Activated CD4-positive, alpha-beta memory T cell treated with anti-CD3 and anti-CD28 coated beads, Interleukin-2, amount 10 ng/mL, durations not matched to agents 7 days and 5 days (primary cell): ENCODE measurements at regions of chr12 and their contacts with region 1.

Region 1: GRCh38 chr12:56189176-56189917 is at the start of gene SMARCC2:
- DNase-seq: peak; percentile 85
- H3K4me3 Mint-ChIP-seq: peak within 1 kb of the TSS; percentile 97
- H3K27ac Mint-ChIP-seq: peak within 1 kb of the TSS; percentile 94
- H3K4me1 Mint-ChIP-seq: peaks cover 53% of the 10 kb centered on the region
- H3K27me3 Mint-ChIP-seq: no peaks in the 10 kb centered on the region
- total RNA-seq, gene SMARCC2: 133 to 137 TPM

Region 2: DNA sequence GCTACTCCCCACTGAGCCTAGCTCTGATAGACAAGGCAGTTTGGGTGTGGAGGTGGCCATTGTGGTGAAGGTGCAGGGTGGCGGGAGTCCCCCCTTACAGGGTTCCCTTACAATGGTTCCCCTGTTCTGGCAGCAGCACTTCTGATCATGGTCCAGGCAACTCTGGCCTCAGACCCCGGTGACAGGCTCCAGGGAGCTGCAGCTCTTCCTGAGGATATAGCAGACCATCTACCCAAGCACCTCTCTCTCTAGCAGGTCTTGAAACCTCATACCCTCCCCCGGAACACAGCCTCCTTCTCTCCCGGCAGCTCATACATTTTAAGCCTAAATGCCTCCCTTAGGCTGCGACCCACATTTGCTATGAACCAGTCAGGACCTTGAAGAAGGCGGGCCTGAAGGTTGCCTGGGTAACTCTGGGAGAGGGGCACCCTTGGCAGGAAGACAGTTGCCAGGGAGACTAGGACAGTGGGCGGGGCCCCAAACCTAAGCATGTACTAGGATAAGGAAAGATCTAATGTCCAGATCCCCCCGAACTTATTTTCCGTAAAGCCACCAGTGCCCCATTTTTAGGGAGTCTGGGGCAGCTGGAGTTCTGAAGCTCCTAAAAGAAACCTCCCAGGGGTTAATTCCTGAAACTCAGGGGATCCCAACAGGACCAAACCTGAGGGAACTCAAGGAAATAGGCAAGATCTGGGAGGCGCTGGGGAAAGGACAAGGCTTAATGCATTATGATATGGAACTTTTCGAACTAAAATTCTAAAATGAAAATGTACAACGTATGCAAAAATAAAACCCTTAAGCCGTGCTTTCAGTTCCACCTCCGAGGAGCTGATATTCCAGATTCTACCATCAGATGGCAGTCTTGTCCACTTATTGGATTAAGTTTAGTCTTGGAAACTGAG is 451.0 kb before region 1 on chr12:
- CTCF ChIA-PET with region 1: interaction called, 12 read pairs
- POLR2A ChIA-PET with region 1: no interaction called
- DNase-seq: peak; percentile 87
- H3K4me3 Mint-ChIP-seq: peak overlapping the region; percentile 88
- H3K27ac Mint-ChIP-seq: peak overlapping the region; percentile 84
- H3K4me1 Mint-ChIP-seq: peaks cover 33% of the 10 kb centered on the region
- H3K27me3 Mint-ChIP-seq: peaks cover 11% of the 10 kb centered on the region

Region 3: DNA sequence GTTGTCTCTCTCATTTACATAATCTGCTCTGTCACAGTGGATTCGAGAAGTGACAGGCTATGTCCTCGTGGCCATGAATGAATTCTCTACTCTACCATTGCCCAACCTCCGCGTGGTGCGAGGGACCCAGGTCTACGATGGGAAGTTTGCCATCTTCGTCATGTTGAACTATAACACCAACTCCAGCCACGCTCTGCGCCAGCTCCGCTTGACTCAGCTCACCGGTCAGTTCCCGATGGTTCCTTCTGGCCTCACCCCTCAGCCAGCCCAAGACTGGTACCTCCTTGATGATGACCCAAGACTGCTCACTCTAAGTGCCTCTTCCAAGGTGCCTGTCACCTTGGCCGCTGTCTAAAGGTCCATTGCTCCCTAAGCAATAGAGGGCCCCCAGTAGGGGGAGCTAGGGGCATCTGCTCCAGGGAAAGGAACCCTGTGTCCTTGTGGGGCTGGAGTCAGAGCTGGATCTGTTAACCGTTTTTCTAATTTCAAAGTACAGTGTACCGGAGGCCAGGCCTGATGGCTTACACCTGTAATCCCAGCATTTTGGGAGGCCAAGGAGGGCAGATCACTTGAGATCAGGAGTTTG is 104.3 kb before region 1 on chr12:
- CTCF ChIA-PET with region 1: no interaction called
- POLR2A ChIA-PET with region 1: no interaction called
- DNase-seq: peak; percentile 47
- H3K4me3 Mint-ChIP-seq: no peak overlapping the region
- H3K27ac Mint-ChIP-seq: no peak overlapping the region
- H3K4me1 Mint-ChIP-seq: peaks cover 8% of the 10 kb centered on the region
- H3K27me3 Mint-ChIP-seq: peaks cover 29% of the 10 kb centered on the region

Region 4: DNA sequence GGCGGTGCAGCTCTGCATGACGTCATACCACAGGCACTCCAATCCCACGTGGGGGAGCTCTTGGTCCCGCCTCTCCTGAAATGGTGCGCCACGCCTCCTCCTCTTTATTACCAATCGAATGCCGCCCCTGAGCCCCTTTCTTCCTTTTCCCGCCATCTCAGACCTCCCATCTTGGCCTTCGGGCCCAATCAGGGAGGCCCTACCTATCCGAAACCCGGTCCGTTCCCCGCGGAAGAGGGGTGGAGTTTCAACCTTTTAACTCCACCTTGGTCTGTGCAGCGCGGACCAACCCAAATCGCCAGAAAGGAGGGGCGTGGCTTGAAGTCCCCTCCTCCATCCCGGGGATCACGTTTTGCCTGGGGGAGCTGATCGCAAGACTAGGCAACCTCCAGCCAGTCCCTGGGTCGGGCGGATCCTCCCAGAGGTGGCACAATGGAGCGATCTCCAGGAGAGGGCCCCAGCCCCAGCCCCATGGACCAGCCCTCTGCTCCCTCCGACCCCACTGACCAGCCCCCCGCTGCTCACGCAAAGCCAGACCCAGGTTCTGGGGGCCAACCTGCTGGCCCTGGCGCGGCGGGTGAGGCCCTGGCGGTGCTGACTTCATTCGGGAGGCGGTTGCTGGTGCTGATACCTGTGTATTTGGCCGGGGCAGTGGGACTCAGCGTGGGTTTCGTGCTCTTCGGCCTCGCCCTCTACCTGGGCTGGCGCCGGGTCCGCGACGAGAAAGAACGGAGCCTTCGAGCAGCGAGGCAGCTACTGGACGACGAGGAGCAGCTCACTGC is 61.3 kb before region 1 on chr12 and contains the start of gene ESYT1:
- CTCF ChIA-PET with region 1: interaction called, 271 read pairs
- POLR2A ChIA-PET with region 1: interaction called, 114 read pairs
- DNase-seq: peak; percentile 99
- H3K4me3 Mint-ChIP-seq: peak within 1 kb of the TSS; percentile 97
- H3K27ac Mint-ChIP-seq: peak within 1 kb of the TSS; percentile 94
- H3K4me1 Mint-ChIP-seq: peaks cover 75% of the 10 kb centered on the region
- H3K27me3 Mint-ChIP-seq: no peaks in the 10 kb centered on the region
- total RNA-seq, gene ESYT1: 266 to 279 TPM

Region 5: GRCh38 chr12:56158029-56158925 is 31.1 kb before region 1 on chr12 and contains the start of gene MYL6:
- CTCF ChIA-PET with region 1: interaction called, 37 read pairs
- POLR2A ChIA-PET with region 1: interaction called, 95 read pairs
- DNase-seq: peak; percentile 94
- H3K4me3 Mint-ChIP-seq: peak within 1 kb of the TSS; percentile 91
- H3K27ac Mint-ChIP-seq: peak within 1 kb of the TSS; percentile 90
- H3K4me1 Mint-ChIP-seq: peaks cover 59% of the 10 kb centered on the region
- H3K27me3 Mint-ChIP-seq: no peaks in the 10 kb centered on the region
- total RNA-seq, gene MYL6: 1,594 to 1,602 TPM

Region 6: DNA sequence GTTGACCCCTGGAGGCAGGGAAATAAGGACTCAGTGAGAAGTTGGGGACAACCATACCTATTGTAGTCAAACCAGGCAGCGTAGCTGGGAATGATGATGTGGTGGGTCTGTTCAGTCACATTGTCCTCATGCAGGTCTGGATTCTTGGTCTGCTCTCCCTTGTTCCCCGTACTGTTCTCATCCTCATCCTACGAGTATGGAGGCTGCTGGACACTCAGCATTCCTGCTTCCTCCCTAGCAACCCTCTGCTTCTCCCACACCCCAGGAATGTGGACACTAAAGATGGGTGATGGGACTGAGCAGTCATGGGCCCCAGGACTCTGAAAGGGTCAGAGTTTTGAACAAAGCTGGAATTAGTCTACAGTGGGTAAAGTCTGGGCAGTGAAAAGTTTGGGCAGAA is 11.0 kb before region 1 on chr12:
- CTCF ChIA-PET with region 1: interaction called, 21 read pairs
- POLR2A ChIA-PET with region 1: interaction called, 25 read pairs
- DNase-seq: no peak
- H3K4me3 Mint-ChIP-seq: no peak overlapping the region
- H3K27ac Mint-ChIP-seq: no peak overlapping the region
- H3K4me1 Mint-ChIP-seq: peaks cover 1% of the 10 kb centered on the region
- H3K27me3 Mint-ChIP-seq: no peaks in the 10 kb centered on the region

Region 7: DNA sequence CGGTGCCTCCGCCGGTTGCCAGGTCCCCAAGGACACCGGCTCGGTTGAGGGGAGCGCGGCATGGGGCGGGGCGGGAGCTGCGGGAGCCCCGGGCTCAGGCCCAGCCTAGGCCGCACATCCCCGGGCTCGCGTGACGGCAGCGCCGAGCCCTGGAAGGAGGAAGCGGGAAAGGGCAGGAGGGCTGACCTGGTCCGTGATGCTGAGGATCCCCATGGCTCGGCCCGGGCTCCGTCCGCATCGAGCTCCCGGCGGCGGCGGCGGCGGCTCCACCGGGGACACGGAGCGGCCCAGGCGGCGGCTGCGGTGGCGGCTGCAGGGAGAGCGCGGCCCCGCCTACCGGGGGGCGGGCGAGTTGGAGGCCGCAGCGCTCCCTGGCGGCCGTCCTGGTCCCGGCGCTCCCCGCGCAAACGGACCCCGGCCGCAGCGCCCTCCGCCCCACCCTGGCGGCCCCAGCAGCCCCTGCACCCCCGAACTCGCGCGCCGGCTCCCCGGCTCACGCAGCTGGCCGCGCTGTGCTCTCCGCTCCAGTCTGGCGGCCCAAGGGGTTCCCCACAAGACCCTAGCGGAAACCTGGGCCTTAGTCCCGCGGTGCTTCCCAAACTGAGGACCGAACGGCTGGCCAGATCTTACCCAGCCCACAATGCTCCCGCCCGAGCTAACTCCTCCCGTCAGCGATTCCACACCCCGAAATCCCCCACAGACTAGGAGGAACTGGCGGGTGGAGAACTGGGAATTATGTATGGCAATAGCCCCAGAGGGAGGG is 68.9 kb after region 1 on chr12 and contains the start of gene ANKRD52:
- CTCF ChIA-PET with region 1: interaction called, 24 read pairs
- POLR2A ChIA-PET with region 1: interaction called, 5 read pairs
- DNase-seq: peak; percentile 80
- H3K4me3 Mint-ChIP-seq: peak within 1 kb of the TSS; percentile 91
- H3K27ac Mint-ChIP-seq: peak within 1 kb of the TSS; percentile 76
- H3K4me1 Mint-ChIP-seq: peaks cover 22% of the 10 kb centered on the region
- H3K27me3 Mint-ChIP-seq: no peaks in the 10 kb centered on the region
- total RNA-seq, gene ANKRD52: 46.4 to 50.1 TPM